Posterior cingulate gyrus (tissue), 11 donors: ENCODE measurements at regions of chr7 and their contacts with region 1.

Region 1: GRCh38 chr7:148932-149855 is 43.2 kb upstream of the FAM20C start:
- DNase-seq: peak; percentile 89 to 99 (median 95)

Region 2: DNA sequence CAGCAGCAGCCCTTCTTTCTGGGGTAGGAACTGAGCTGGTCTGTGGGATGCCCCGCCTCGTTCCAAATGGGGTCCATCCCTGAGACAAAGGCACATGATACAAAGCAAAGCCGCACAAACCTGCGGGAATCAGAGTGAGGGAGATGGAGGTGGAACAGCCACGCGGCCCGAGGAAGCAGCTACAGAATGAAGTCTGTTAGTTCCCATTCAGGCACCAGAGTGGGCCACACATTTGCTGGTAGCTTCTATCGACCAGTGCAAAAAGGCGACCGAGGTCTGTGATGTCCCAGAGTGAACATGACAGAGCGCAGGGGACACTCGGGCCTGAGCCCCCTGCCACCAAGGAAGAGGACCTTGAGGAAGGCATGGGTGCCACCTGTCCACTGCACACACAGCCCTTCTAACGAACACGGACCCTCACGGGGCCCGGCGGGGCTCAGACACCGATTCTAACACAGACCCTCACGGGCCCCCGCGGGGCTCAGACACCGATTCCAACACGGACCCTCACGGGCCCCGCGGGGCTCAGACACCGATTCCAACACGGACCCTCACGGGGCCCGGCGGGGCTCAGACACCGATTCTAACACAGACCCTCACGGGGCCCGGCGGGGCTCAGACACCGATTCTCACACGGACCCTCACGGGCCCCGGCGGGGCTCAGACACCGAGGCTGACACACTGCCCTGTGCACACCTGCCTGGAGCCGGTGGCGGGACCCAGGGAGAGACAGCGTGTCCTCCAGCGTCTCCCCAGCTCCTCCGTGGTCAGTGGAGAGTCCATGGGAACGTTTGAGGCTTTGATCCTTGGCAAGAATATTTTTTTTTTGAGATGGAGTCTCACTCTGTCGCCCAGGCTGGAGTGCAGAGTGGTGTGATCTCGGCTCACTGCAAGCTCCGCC is 10.4 kb after region 1 on chr7:
- intact Hi-C with region 1: loop called (anchors 1 kb)
- DNase-seq: peak in 5 of 10 donors; percentile 5 to 88 (median 69)

Region 3: DNA sequence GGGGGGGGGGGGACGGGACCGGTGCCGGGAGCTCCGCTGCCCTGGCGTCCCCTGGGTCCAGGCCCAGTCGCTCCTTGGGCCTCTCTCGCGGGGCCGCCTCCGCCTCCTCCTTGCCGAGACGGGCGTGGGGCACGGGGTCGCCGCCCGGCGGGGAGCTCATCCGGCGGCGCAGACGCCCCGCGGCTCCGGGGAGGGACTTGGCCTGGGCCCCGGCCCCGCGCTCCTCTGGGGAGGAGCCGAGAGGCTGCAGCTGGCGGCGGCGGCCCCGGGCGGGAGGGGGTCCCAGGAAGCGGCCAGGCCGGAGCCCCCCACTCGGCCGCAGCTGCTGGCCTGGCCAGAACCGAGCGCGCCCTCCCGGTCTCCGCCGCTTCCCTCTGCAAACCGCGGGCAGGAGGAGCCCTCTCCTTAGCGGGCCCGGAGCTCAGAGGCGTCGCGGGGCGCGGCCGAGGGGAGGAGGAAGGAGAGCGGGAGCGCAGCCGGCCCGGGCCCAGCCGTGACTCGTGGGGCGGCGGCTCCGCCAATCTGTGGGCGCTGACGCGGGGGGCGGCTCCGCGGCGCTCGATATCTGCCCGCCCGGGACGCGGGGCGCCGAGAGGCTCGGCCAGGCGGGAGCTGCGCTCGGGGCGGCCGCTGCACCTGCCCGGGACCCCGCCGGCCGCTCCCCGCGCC is 42.9 kb after region 1 on chr7 and contains the start of gene FAM20C:
- intact Hi-C with region 1: loop called (anchors 2 kb)
- DNase-seq: peak; percentile 73 to 98 (median 86)